Heart right ventricle (tissue), 16 donors: ENCODE measurements at regions of chr22 and their contacts with region 1.

Region 1: DNA sequence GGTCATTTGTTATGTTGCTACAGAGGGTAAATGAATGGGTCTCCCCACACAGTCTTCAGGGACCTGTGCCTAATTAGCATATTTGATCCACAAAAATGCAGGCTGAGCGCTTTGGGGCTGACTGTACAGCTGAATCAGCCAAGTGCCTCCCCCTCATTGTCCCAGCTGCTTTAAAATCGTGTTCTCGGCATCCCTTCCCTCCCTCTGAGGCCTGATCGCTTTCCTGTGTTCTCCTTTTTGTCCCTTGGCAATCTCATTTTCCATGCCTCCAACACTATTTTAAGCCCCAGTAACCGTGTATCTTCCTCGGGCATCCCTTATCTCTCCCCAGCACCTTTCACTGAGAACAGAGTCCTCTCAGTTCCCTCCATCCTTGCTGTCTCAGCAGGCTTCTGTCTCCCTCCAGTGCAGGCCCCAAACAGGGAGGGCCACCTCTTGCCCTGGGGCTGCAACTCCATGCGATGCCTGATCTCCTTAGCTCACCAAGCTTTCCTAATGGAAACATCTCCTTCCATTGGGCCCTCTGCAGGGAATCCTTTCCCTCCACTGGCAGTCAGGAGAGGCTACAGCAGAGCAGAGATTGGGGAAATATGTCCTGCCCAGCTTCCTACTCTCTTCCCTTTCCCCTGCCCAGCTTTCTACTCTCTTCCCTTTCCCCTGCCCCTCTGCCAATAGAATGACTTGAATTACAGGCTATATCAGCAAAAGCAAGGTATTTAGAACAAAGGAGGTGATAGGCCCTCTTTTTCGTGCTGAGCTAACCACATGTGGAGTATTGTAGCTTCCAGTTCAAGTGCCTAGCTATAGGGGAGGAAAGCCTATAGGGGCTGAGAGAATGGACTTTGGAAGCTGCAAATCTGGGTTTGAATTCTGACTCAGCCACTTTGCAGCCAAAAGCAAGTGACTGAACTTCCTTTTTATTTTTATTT is 13.8 kb downstream of the UQCR10 start:
- DNase-seq: no peak
- ATAC-seq: peak in 6 of 8 donors; percentile 16 to 46 (median 26)
- H3K4me3 ChIP-seq: no peak overlapping the region
- H3K27ac ChIP-seq: peak overlapping the region; percentile 21 to 84 (median 78)
- H3K4me1 ChIP-seq: peaks cover 10 to 56% (median 41%) of the 10 kb centered on the region in 9 donors
- H3K27me3 ChIP-seq: no peaks in the 10 kb centered on the region
- CTCF ChIP-seq: no peak

Region 2: DNA sequence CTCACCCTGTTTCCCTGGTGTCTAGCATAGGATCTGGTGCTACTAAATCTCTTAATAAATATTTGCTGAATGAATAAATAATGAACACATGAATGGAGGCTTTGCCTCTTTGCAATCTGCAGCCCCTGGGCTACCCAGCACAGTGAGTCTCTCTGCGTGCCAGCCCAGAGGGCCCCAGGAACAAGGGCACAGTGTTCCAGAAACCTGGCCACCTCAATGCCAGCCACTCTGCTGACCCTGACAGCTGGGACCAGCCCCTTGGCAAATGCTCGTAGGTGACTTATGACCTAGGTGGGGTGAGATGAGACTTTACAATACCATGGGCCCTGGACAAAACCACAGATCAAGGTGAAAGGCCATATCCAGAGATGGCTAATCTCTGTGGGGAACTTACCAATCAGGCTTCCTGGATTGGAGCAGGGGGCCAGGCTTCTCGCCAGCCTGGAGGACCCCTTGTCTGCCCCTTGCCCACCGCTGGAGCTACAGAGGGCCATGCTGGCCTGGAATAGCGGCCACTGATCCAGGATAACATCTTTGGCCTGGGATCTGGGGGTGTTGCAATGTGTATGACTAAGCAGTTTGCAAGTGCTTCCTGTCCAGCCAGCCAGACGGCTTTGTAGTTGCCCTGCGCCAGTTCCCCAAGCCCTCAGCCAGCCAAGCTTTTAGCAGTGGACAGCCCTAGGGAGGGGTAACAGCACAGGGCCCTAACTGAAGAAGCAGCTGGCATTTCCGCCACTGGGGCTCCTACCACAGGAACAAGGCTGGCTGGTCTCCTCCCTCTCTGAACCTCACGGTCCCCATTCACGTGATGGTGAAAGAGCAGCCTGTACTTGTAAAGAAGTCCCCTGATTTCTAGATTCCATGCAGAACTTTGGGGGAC is 18.0 kb after region 1 on chr22:
- intact Hi-C with region 1: loop called in 1 of 10 experiments (anchors 2 kb)
- DNase-seq: peak; percentile 84 to 90
- ATAC-seq: peak; percentile 95 to 98 (median 97)
- H3K4me3 ChIP-seq: peak overlapping the region in 4 of 10 donors; percentile 10 to 18 (median 16)
- H3K27ac ChIP-seq: peak overlapping the region; percentile 52 to 94 (median 82)
- H3K4me1 ChIP-seq: peaks cover 11 to 46% (median 32%) of the 10 kb centered on the region in 9 donors
- H3K27me3 ChIP-seq: no peaks in the 10 kb centered on the region
- CTCF ChIP-seq: peak in 3 of 9 donors; percentile 21 to 30 (median 24)

Region 3: DNA sequence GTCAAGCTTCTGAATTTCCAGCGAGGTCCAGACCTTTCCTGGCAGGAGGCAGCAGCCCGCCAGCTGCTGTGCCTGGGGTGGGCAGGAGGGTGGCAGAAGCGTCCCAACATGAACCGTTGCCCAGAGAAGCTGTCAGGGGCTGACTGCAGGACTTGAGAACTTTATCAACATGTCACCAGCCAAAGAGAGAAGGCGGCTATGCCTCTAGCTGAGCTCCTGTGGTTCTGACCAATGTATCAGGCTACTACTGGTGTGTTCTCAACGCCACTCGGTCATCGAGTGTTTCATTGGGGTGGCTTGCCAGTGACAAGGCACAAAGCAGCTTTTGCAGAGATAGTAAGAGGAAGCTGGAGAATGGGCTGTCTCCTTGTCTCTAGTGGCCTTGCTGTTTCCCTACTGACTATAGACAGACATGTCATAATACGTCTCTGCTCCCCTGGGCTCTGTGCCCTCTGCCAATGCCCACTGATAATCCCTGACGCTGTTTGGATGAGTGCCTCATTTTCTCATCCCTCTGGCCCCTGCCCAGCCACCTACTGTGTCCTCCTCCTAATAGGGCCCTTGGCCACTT is 74.7 kb after region 1 on chr22:
- intact Hi-C with region 1: loop called in 1 of 10 experiments (anchors 2 kb)
- DNase-seq: peak; percentile 69 to 79
- ATAC-seq: peak; percentile 83 to 97 (median 96)
- H3K4me3 ChIP-seq: no peak overlapping the region
- H3K27ac ChIP-seq: peak overlapping the region; percentile 30 to 92 (median 70)
- H3K4me1 ChIP-seq: peaks cover 0 to 28% (median 5%) of the 10 kb centered on the region in 9 donors
- H3K27me3 ChIP-seq: no peaks in the 10 kb centered on the region
- CTCF ChIP-seq: peak in 6 of 9 donors; percentile 13 to 59 (median 40)